B cell (primary cell): ENCODE measurements at regions of chr1 and their contacts with region 1.

Region 1: GRCh38 chr1:23809751-23810171 is 9.2 kb upstream of the GALE start:
- DNase-seq: peak; percentile 90
- ATAC-seq: peak; percentile 89
- H3K4me3 ChIP-seq: peak overlapping the region in 1 of 5 experiments; percentile 29
- H3K4me3 Mint-ChIP-seq: no peak overlapping the region
- H3K27ac ChIP-seq: peak overlapping the region; percentile 53 to 73
- H3K27ac Mint-ChIP-seq: peak overlapping the region; percentile 84
- H3K4me1 ChIP-seq: peaks cover 18 to 21% of the 10 kb centered on the region in 2 donors
- H3K4me1 Mint-ChIP-seq: peaks cover 26% of the 10 kb centered on the region
- H3K27me3 ChIP-seq: no peaks in the 10 kb centered on the region
- H3K27me3 Mint-ChIP-seq: no peaks in the 10 kb centered on the region
- CTCF ChIP-seq: peak; percentile 78

Region 2: GRCh38 chr1:23484253-23485001 is 325.3 kb before region 1 on chr1:
- CTCF ChIA-PET with region 1: no interaction called
- POLR2A ChIA-PET with region 1: no interaction called
- intact Hi-C with region 1: no loop called
- DNase-seq: peak; percentile 94
- ATAC-seq: peak; percentile 85
- H3K4me3 ChIP-seq: peak overlapping the region in 4 of 5 experiments; percentile 43 to 79 (median 66)
- H3K4me3 Mint-ChIP-seq: peak overlapping the region; percentile 90
- H3K27ac ChIP-seq: no peak overlapping the region
- H3K27ac Mint-ChIP-seq: peak overlapping the region; percentile 82
- H3K4me1 ChIP-seq: peaks cover 14 to 23% of the 10 kb centered on the region in 2 donors
- H3K4me1 Mint-ChIP-seq: peaks cover 29% of the 10 kb centered on the region
- H3K27me3 ChIP-seq: peaks cover 0 to 22% (median 8%) of the 10 kb centered on the region in 4 experiments
- H3K27me3 Mint-ChIP-seq: peaks cover 25% of the 10 kb centered on the region
- CTCF ChIP-seq: peak; percentile 2

Region 3: DNA sequence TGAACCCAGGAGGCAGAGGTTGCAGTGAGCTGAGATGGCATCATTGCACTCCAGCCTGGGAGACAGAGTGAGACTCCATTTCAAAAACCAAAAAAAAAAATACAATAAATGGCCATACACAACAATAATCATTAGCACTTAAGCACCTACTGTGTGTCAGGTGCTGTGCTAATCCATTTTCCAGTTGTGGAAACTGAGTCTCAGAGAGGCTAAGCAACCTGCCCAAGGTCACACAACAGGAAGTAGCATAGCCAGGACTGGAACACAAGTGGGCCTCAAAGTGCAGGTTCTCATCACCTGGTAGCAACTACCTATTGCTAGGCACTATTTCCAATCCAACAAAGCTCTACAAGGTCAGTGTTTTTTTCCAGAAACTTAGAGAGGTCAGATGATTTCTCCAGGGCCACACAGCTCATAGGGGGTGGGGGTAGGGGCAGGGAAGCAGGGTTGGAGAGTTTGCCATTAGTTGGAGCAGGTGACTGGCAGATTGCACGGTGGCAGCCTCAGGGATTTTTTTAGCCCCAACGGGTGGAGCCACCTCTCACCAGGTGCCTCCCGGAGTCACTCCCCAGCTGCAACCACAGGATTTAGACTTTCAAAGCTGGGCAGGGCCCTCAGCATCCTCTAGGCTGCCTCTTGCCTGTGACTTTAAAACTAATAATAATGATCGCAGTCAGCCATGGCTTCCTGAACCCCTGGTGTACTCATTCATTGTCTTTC is 198.0 kb before region 1 on chr1:
- CTCF ChIA-PET with region 1: no interaction called
- POLR2A ChIA-PET with region 1: no interaction called
- intact Hi-C with region 1: no loop called
- DNase-seq: peak; percentile 71
- ATAC-seq: peak; percentile 57
- H3K4me3 ChIP-seq: peak overlapping the region in 1 of 5 experiments; percentile 40
- H3K4me3 Mint-ChIP-seq: peak overlapping the region; percentile 75
- H3K27ac ChIP-seq: peak overlapping the region; percentile 76 to 88
- H3K27ac Mint-ChIP-seq: peak overlapping the region; percentile 86
- H3K4me1 ChIP-seq: peaks cover 71 to 78% of the 10 kb centered on the region in 2 donors
- H3K4me1 Mint-ChIP-seq: peaks cover 80% of the 10 kb centered on the region
- H3K27me3 ChIP-seq: no peaks in the 10 kb centered on the region
- H3K27me3 Mint-ChIP-seq: no peaks in the 10 kb centered on the region
- CTCF ChIP-seq: no peak

Region 4: GRCh38 chr1:23825076-23825761 is 15.5 kb after region 1 on chr1 and contains the start of gene HMGCL:
- CTCF ChIA-PET with region 1: interaction called, 64 read pairs
- POLR2A ChIA-PET with region 1: interaction called, 6 read pairs
- intact Hi-C with region 1: loop called (anchors 1 kb)
- DNase-seq: peak; percentile 92
- ATAC-seq: peak; percentile 98
- H3K4me3 ChIP-seq: peak within 1 kb of the TSS; percentile 76 to 95 (median 93)
- H3K4me3 Mint-ChIP-seq: peak within 1 kb of the TSS; percentile 96
- H3K27ac ChIP-seq: peak within 1 kb of the TSS; percentile 81 to 97
- H3K27ac Mint-ChIP-seq: peak within 1 kb of the TSS; percentile 98
- H3K4me1 ChIP-seq: peaks cover 10 to 14% of the 10 kb centered on the region in 2 donors
- H3K4me1 Mint-ChIP-seq: peaks cover 22% of the 10 kb centered on the region
- H3K27me3 ChIP-seq: no peaks in the 10 kb centered on the region
- H3K27me3 Mint-ChIP-seq: no peaks in the 10 kb centered on the region
- CTCF ChIP-seq: no peak
- total RNA-seq, gene HMGCL: 35.9 and 41.2 TPM in 2 replicates

Region 5: DNA sequence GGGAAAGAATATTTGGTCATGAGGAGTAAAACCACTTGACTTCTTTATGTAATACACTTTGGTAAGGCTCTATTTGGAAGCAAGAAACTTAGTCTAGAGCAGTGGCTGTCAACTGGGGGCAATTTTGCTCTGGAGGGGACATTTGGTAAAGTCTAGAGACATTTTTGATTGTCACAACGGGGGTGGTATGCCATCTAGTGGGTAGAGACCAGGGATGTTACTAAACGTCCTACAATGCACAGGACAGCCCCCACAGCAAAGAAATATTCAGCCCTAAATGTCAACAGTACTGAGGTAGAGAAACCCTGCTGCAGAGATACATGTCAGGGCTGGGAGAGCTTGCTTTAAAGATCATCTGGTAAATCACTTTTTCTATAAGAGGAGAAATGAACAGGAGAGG is 44.8 kb after region 1 on chr1:
- CTCF ChIA-PET with region 1: interaction called, 3 read pairs
- POLR2A ChIA-PET with region 1: no interaction called
- intact Hi-C with region 1: loop called (anchors 1 kb)
- DNase-seq: no peak
- ATAC-seq: no peak
- H3K4me3 ChIP-seq: no peak overlapping the region
- H3K4me3 Mint-ChIP-seq: no peak overlapping the region
- H3K27ac ChIP-seq: no peak overlapping the region
- H3K27ac Mint-ChIP-seq: no peak overlapping the region
- H3K4me1 ChIP-seq: no peaks in the 10 kb centered on the region
- H3K4me1 Mint-ChIP-seq: no peaks in the 10 kb centered on the region
- H3K27me3 ChIP-seq: no peaks in the 10 kb centered on the region
- H3K27me3 Mint-ChIP-seq: no peaks in the 10 kb centered on the region
- CTCF ChIP-seq: no peak

Region 6: DNA sequence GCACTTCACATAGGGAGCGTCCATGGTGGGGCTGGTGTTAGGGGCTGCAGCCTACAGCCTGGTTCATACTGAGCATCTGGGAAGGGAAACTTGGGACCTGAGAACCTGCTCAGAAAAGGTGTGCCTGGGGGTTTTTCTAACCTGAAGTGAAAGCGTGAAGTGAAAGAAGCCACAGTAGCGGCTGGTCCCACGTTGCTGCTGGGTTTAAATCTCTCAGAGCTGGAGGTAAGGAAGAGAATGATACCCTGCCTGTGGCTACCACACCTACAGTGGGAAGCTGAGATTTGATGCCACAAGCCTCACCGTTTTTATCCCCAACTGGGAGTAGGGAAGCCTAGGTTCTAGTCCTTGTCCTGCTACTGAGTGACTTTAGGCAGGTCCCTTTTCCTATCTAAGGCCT is 79.3 kb after region 1 on chr1:
- CTCF ChIA-PET with region 1: interaction called, 12 read pairs
- POLR2A ChIA-PET with region 1: no interaction called
- intact Hi-C with region 1: no loop called
- DNase-seq: peak; percentile 78
- ATAC-seq: peak; percentile 62
- H3K4me3 ChIP-seq: peak overlapping the region in 1 of 5 experiments; percentile 60
- H3K4me3 Mint-ChIP-seq: peak overlapping the region; percentile 81
- H3K27ac ChIP-seq: peak overlapping the region; percentile 70 to 82
- H3K27ac Mint-ChIP-seq: peak overlapping the region; percentile 88
- H3K4me1 ChIP-seq: peaks cover 68 to 74% of the 10 kb centered on the region in 2 donors
- H3K4me1 Mint-ChIP-seq: peaks cover 72% of the 10 kb centered on the region
- H3K27me3 ChIP-seq: no peaks in the 10 kb centered on the region
- H3K27me3 Mint-ChIP-seq: no peaks in the 10 kb centered on the region
- CTCF ChIP-seq: no peak

Region 7: GRCh38 chr1:23916209-23917131 is 106.7 kb after region 1 on chr1:
- CTCF ChIA-PET with region 1: interaction called, 199 read pairs
- POLR2A ChIA-PET with region 1: interaction called, 9 read pairs
- intact Hi-C with region 1: loop called (anchors 1 kb)
- DNase-seq: peak; percentile 86
- ATAC-seq: peak; percentile 53
- H3K4me3 ChIP-seq: peak overlapping the region in 2 of 5 experiments; percentile 22 to 50
- H3K4me3 Mint-ChIP-seq: peak overlapping the region; percentile 47
- H3K27ac ChIP-seq: peak overlapping the region; percentile 48 to 77
- H3K27ac Mint-ChIP-seq: peak overlapping the region; percentile 90
- H3K4me1 ChIP-seq: peaks cover 52 to 72% of the 10 kb centered on the region in 2 donors
- H3K4me1 Mint-ChIP-seq: peaks cover 64% of the 10 kb centered on the region
- H3K27me3 ChIP-seq: no peaks in the 10 kb centered on the region
- H3K27me3 Mint-ChIP-seq: no peaks in the 10 kb centered on the region
- CTCF ChIP-seq: peak; percentile 80

Region 8: DNA sequence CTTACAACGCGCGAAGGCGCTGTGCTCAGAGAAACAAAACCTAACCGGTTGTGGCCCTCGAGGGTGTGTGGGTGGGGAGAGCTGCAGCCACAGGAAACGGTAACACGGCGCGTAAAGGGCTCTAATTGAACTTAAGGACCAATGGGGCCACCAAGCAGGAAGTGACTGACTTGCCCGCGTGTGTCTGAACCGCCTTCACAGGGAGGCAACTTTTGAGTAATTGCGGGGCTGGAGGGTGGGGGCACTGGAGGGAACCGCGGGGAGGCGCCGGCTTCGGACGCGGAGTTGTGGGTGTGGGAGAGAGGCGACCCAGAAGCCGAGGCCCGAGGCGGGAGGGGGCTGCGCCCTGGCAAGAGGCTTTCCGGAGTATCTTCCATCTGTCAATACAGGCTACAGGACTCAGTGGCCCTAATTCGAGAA is 149.3 kb after region 1 on chr1:
- CTCF ChIA-PET with region 1: interaction called, 19 read pairs
- POLR2A ChIA-PET with region 1: interaction called, 5 read pairs
- intact Hi-C with region 1: no loop called
- DNase-seq: peak; percentile 97
- ATAC-seq: peak; percentile 73
- H3K4me3 ChIP-seq: peak overlapping the region; percentile 63 to 98 (median 97)
- H3K4me3 Mint-ChIP-seq: peak overlapping the region; percentile 100
- H3K27ac ChIP-seq: peak overlapping the region; percentile 93 to 98
- H3K27ac Mint-ChIP-seq: peak overlapping the region; percentile 100
- H3K4me1 ChIP-seq: peaks cover 51 to 57% of the 10 kb centered on the region in 2 donors
- H3K4me1 Mint-ChIP-seq: peaks cover 70% of the 10 kb centered on the region
- H3K27me3 ChIP-seq: no peaks in the 10 kb centered on the region
- H3K27me3 Mint-ChIP-seq: no peaks in the 10 kb centered on the region
- CTCF ChIP-seq: peak; percentile 1